Activated CD8-positive, alpha-beta memory T cell treated with anti-CD3 and anti-CD28 coated beads, Interleukin-2, amount 10 ng/mL, durations not matched to agents 7 days and 5 days (primary cell): ENCODE measurements at regions of chr12 and their contacts with region 1.

Region 1: DNA sequence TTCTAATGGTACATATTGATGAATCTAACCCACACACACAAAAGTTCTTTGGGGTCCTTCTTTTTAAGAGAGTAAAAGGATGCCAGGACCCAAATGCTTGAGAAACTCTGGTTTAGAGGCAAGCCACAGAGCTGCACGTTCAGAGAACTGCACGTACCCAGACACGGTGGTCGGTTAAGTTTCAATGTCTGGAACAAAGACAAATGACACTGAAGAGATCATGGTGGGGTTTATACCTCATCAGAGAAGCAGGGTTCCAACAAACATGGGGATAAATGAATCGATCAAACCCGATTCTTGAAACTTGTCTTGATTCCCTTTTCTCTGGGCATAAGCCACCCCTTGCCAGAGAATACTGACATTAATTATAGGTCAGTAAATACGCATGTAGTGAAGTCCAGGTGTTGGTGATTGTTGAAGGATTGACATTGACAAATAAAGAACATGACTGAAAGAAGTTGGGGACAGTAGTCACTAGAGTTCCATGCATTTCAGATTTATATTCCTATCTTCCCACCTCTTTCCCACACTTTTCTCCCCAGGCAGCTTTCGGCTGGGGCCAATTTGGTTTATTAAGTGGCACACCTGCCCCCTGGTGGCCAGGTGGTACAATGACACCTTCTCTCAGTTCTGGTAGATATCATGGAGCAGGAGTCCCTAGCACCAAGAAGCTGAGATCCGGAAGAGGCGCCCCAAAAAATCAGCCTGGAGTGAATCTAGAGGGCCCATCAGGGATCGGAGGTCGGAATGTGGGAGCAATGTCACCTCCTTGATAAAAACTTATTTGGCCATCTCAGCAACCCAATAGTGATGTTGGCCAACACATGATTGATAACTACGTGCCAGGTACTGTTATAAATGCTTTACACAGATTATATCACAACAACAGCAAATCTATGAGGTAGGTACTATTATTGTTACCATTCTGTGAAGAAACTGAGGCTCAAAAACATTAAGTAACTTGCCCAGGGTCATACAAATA is 17.8 kb upstream of the HDAC7 start:
- DNase-seq: peak; percentile 73
- ATAC-seq: peak; percentile 46
- H3K4me3 Mint-ChIP-seq: no peak overlapping the region
- H3K27ac Mint-ChIP-seq: peak overlapping the region; percentile 2
- H3K4me1 Mint-ChIP-seq: peaks cover 58% of the 10 kb centered on the region
- H3K27me3 Mint-ChIP-seq: peaks cover 2% of the 10 kb centered on the region

Region 2: DNA sequence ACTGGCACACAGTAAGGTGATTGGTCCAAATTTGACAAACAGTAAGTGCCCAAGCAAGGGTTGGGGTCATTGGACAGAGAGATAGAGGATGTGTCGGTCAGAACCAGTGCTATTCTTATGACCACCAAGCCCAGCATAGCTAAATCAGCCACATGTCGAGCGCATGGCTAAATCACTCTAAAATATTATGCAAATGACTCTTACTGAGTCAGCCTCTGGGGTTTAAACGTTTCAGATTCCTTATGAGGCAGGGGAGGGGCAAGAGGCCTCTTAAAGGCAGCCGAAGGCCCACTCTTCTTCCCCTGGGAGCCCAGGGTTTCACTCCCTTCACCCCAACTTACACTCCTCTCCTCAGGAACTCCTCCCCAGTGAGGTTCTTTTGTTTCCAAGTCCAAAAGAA is 111.6 kb before region 1 on chr12:
- CTCF ChIA-PET with region 1: interaction called, 17 read pairs
- DNase-seq: no peak
- ATAC-seq: no peak
- H3K4me3 Mint-ChIP-seq: no peak overlapping the region
- H3K27ac Mint-ChIP-seq: no peak overlapping the region
- H3K4me1 Mint-ChIP-seq: peaks cover 34% of the 10 kb centered on the region
- H3K27me3 Mint-ChIP-seq: no peaks in the 10 kb centered on the region

Region 3: GRCh38 chr12:47758834-47759690 is 78.4 kb before region 1 on chr12 and contains the start of gene RAPGEF3:
- CTCF ChIA-PET with region 1: interaction called, 16 read pairs
- DNase-seq: peak; percentile 80
- ATAC-seq: peak; percentile 87
- H3K4me3 Mint-ChIP-seq: peak within 1 kb of the TSS; percentile 70
- H3K27ac Mint-ChIP-seq: peak within 1 kb of the TSS; percentile 45
- H3K4me1 Mint-ChIP-seq: peaks cover 47% of the 10 kb centered on the region
- H3K27me3 Mint-ChIP-seq: peaks cover 2% of the 10 kb centered on the region
- total RNA-seq, gene RAPGEF3: 1.5 to 1.9 TPM

Region 4: DNA sequence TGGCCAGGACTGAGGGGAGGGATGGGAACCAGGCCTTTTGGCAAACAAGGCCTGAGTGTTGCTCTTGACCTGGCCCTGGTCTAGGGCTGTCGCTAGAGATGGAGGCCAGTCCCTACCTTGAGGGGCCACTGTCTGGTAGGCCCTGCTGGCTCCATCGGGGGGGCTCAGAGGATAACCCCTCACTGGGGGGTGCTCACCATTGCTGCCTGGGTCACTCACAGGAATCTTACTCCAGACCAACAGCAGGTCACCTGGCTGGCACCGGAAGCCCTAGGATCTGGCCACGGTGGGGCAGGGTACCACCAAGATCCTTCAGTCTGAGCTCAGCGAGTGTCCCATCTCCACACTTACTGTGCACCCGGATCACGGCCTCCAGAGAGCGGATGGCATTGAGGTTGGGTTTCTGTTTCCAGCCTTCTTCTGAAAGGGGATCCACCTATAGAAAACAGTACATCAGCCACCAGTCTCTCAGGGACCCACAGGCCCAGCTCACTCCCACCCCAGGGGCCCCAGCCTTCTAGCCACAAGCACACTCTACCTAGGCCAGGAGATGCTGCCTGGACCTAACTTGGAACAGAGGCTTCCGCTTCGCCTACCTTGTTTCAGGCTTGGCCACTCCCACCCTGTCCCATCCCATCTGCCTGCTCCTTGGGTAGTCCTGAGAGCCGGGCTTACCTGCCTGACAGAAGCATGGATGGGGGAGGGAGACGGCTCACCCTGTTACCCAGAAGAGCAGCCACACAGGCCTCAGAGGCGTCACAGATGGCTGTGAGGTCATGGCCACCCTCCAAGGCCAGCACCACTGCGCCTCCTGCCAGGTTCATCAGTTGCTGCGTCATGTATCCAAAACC is 52.2 kb before region 1 on chr12:
- CTCF ChIA-PET with region 1: interaction called, 377 read pairs
- DNase-seq: no peak
- ATAC-seq: no peak
- H3K4me3 Mint-ChIP-seq: no peak overlapping the region
- H3K27ac Mint-ChIP-seq: peak overlapping the region; percentile 42
- H3K4me1 Mint-ChIP-seq: no peaks in the 10 kb centered on the region
- H3K27me3 Mint-ChIP-seq: no peaks in the 10 kb centered on the region

Region 5: DNA sequence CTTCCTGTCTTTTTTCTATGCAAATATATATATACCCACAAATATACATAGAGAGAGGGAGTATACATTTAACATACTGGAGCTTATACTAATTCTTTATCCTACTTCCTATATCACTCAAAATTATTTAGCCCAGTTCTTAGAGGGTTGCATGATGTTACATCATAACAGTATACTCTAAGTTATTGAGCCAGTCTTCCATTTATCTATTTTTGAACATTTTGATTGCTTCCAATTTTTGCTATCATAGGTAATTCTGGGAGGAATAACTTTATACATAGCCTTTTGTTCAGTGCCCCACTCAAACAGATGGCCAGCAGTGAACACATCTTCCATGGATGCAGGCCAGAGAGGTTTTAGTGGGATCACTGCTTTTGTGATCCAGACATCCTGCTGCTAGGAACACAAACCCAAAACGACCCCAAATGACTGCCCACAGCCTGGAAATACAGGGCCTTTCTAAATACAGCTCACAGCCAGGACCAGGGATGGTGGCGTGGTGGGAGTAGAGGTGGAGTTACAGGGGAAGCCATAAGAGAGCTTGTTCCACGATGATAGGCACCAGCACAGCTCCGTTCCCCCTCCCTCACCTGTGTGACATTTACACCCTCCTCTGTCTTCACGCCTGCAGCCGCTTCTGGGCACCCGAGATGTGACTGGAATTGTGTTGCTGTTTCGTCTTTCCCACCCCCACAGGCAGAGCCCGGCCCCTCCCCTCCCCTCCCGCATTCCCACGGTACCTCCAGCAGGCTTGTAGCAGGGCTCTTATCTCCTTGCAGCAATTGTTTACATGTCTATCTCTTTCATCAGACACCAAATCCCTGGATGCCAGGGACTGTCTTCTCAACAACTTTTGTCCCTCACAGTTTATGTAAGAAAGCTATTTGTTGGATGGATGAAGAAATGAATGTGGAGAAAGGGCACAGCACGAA is 12.9 kb after region 1 on chr12:
- CTCF ChIA-PET with region 1: interaction called, 48 read pairs
- DNase-seq: no peak
- ATAC-seq: no peak
- H3K4me3 Mint-ChIP-seq: no peak overlapping the region
- H3K27ac Mint-ChIP-seq: peak overlapping the region; percentile 3
- H3K4me1 Mint-ChIP-seq: peaks cover 6% of the 10 kb centered on the region
- H3K27me3 Mint-ChIP-seq: no peaks in the 10 kb centered on the region